ENCODE measurements at regions of chr4 and their contacts with region 1.

Region 1: DNA sequence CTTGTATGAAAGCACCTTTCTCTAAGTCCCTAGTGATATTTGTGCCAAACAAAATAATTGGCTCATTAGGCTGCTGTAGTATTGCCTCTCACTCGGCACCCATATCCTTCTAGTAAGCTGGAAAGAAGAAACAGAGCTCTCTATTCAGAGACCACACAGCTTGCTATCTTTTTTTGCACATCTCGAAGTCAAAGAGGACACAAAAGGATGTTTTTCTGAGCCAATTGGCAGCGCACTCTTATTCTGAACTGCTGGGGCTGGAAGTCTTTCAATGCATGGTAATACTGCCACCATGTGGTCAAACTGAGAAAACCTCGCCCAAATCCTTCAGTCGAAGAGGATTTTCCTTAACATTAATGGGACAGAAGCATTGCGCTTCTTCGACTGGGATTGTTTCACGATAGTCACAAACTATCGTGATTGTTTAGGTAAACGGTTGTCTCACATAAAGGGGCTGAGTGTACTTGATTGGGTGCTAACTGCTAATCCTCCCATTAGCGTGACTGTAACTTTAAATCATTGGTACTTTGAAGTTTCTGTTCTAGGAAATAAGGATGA is 572.0 kb upstream of the LCORL start:
- DNase-seq: peak in 1 of 2 donors; percentile 17
- ATAC-seq: peak in 1 of 2 donors; percentile 58
- H3K4me3 ChIP-seq: no peak overlapping the region
- H3K27ac ChIP-seq: no peak overlapping the region
- H3K4me1 ChIP-seq: no peaks in the 10 kb centered on the region
- H3K27me3 ChIP-seq: no peaks in the 10 kb centered on the region
- CTCF ChIP-seq: peak; percentile 27 to 80 (median 64)
- POLR2A ChIP-seq: no peak

Region 2: DNA sequence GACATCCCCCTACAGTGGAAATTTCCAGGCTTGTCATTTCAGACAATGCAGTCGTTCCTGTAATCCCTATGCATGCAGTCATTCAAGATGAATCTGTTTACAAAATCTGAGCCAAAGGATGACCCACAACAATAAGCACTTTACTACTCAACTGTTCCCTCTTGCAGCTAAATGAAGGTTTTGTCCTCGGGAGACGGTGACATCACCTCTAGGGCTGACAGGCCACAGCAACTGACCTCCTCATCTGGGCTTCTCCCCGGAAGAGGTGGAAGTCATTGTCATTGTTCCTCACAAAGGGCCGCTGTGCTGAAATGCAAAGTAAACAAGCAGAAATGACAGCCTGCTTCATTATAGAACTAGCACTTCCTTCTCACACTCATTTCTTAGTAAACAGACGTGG is 1049.3 kb before region 1 on chr4:
- in situ Hi-C with region 1: loop called (anchors 5 to 25 kb)
- intact Hi-C with region 1: loop called (anchors 2 kb)
- DNase-seq: no peak
- ATAC-seq: no peak
- H3K4me3 ChIP-seq: no peak overlapping the region
- H3K27ac ChIP-seq: no peak overlapping the region
- H3K4me1 ChIP-seq: no peaks in the 10 kb centered on the region
- H3K27me3 ChIP-seq: no peaks in the 10 kb centered on the region
- CTCF ChIP-seq: no peak
- POLR2A ChIP-seq: no peak

Region 3: DNA sequence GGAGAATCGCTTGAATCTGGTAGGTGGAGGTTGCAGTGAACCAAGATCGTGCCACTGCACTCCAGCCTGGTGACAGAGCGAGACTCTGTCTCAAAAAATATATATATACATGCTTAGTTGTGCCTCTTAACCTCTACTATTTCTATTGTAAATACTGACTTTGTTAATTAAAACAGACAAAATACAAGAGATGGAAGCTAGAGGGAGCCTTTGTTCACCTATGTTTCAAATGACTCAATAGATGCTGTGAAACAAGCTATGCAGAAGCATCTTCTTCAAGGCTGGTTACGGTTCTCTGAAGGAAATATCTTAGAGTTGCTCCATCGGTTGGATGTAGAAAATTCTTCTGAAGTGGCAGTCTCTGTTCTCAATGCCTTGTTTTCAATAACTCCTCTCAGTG is 776.5 kb before region 1 on chr4:
- in situ Hi-C with region 1: loop called in 3 of 4 experiments (anchors 5 to 25 kb)
- intact Hi-C with region 1: no loop called
- DNase-seq: no peak
- ATAC-seq: peak; percentile 41 to 42
- H3K4me3 ChIP-seq: no peak overlapping the region
- H3K27ac ChIP-seq: no peak overlapping the region
- H3K4me1 ChIP-seq: no peaks in the 10 kb centered on the region
- H3K27me3 ChIP-seq: no peaks in the 10 kb centered on the region
- CTCF ChIP-seq: peak in 4 of 5 experiments; percentile 26 to 54 (median 38)
- POLR2A ChIP-seq: no peak

Region 4: DNA sequence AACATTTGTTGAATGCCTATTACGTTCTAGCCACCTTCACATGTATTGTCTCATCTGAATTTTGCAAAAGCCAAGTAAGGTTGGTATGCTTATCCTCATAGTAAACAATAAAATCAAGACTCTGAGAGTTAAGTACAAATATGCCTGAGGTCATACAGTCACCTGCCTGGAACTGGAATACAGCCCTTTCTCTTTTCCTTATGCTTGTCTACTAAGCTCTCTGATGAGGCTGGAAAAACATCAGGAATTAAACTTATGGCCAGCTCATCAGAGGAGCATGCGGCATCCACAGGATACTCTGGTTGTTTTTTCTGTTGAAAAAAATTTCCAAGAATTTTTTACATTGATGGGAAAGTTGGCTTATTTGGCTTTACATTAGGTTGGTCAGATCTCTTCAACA is 747.3 kb before region 1 on chr4:
- in situ Hi-C with region 1: loop called in 1 of 4 experiments (anchors 25 kb)
- intact Hi-C with region 1: no loop called
- DNase-seq: no peak
- ATAC-seq: no peak
- H3K4me3 ChIP-seq: no peak overlapping the region
- H3K27ac ChIP-seq: no peak overlapping the region
- H3K4me1 ChIP-seq: no peaks in the 10 kb centered on the region
- H3K27me3 ChIP-seq: no peaks in the 10 kb centered on the region
- CTCF ChIP-seq: no peak
- POLR2A ChIP-seq: no peak

Region 5: DNA sequence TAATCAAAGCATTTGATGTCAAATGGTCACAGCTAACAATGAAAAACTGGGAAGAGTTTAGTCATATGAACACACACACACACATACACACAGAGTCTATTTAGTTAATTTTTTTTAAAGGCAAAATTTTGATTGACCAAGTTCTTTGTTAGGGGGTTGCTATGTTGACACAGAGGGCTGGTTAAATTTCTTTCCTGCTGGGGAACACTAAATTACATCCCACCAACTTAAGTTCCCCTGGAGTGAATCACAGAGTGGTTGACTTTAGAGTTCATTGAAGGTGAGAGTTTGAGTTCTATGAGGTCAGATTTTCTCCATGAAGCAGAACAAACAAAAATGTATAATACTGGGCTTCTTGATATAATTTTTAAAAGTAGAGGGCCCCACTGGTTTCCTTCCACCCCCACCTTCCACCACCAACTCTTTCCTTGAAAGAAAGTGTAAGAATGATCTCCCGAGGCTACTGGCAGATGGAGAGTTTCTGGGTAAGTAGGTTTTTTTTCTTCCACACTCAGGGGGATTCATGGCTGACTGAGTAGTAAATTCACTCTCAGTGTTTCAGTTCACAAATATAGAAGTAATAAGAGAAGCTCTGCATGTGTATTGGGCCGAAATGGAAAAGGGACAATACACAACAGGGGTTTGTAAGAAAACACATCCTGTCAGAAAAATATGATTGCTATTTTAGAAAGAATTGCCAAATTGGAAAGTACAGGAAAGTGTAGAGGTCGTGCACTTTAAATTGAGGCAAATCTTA is 345.0 kb after region 1 on chr4:
- in situ Hi-C with region 1: no loop called
- intact Hi-C with region 1: no loop called
- DNase-seq: no peak
- ATAC-seq: no peak
- H3K4me3 ChIP-seq: no peak overlapping the region
- H3K27ac ChIP-seq: no peak overlapping the region
- H3K4me1 ChIP-seq: no peaks in the 10 kb centered on the region
- H3K27me3 ChIP-seq: no peaks in the 10 kb centered on the region
- CTCF ChIP-seq: no peak
- POLR2A ChIP-seq: no peak

Measured in gastrocnemius medialis (tissue), 4 donors.